Activated CD4-positive, alpha-beta T cell treated with anti-CD3 and anti-CD28 coated beads for 36 hours (primary cell): ENCODE measurements at regions of chr15 and their contacts with region 1.

Region 1: DNA sequence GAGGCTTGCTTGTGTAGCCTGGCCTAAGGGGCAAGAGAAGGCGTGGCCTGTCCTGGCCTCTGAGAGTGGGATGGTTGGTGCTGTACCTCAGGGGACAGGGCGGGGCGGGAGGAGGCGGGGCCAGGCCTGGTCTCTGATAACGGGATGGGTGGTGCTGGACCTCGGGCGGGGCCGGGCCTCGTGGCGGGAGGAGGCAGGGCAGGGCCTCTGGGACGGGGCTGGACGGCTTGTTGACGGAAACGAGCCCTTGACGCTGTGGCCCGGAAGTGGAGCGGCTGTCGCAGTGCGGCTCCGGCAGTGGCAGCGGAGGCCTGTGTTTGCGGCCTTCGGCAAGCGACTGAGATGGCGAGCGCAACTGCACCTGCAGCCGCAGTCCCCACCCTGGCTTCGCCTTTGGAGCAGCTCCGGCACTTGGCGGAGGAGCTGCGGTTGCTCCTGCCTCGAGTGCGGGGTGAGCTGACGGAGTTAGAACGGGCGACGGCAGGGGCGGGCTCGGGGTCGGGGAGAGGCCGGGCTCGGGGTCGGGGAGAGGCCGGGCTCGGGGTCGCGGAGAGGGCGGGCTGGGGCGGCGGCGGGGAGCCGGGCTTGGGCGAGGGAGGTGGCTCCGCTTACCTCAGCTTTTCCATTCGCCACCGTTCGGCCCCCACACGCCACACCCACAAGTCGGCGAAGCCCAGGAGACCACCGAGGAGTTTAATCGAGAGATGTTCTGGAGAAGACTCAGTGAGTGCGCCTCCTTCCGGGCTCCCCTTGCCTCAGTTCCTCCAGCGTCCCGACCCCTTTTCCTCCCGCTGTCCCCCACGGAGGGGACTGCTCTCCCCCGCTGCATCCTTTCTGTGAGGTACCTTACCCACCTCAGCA is at the start of gene CCNDBP1:
- DNase-seq: peak; percentile 94
- ATAC-seq: peak; percentile 96
- H3K4me3 Mint-ChIP-seq: peak within 1 kb of the TSS; percentile 90
- H3K27ac Mint-ChIP-seq: peak within 1 kb of the TSS; percentile 94
- H3K4me1 Mint-ChIP-seq: peaks cover 26% of the 10 kb centered on the region
- H3K27me3 Mint-ChIP-seq: no peaks in the 10 kb centered on the region
- total RNA-seq, gene CCNDBP1: 45.8 to 51.6 TPM

Region 2: DNA sequence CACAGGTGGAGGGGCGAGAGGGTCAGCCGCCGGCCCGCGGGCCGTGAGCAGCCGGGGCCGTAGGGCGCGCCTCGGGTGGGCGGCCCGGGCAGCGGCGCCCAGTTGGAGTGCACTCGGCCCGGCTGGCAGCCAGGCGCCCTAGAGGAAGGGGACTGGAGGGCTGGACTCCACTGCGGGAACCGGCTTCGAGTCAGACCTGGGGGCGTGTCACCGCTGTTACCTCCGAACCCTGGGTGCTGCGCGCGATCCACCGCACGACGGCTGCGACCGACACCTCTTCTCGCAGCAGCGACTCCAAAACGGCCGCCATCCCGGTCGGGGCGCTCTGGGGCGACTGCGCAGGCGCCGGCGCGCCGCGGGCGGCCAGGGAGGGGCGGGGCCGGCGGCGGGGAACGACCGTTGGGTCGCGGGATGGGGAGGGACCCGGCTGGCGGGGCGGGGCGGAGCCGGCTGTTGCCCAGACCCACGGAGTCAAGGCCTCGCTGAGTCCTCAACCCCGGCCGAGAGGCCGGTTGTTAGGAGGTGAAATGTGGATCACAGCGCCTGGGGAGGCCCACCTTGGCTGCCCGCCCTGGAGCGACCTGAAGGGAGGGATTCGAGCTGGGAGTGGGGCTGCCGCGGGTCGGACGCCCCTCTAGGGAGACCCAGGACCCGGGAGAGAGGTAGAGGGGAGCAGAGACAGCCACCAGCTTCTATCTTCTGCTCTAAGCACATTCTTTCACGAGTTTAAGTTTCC is 448.4 kb before region 1 on chr15 and contains the start of gene CDAN1:
- CTCF ChIA-PET with region 1: no interaction called
- POLR2A ChIA-PET with region 1: no interaction called
- intact Hi-C with region 1: loop called in 1 of 2 experiments (anchors 2 kb)
- DNase-seq: peak; percentile 96
- ATAC-seq: peak; percentile 94
- H3K4me3 Mint-ChIP-seq: peak within 1 kb of the TSS; percentile 76
- H3K27ac Mint-ChIP-seq: peak within 1 kb of the TSS; percentile 61
- H3K4me1 Mint-ChIP-seq: peaks cover 16% of the 10 kb centered on the region
- H3K27me3 Mint-ChIP-seq: no peaks in the 10 kb centered on the region
- total RNA-seq, gene CDAN1: 12.9 to 16.6 TPM

Region 3: GRCh38 chr15:43127752-43128151 is 57.6 kb before region 1 on chr15:
- CTCF ChIA-PET with region 1: no interaction called
- POLR2A ChIA-PET with region 1: no interaction called
- intact Hi-C with region 1: loop called in 1 of 2 experiments (anchors 1 kb)
- DNase-seq: no peak
- ATAC-seq: no peak
- H3K4me3 Mint-ChIP-seq: no peak overlapping the region
- H3K27ac Mint-ChIP-seq: no peak overlapping the region
- H3K4me1 Mint-ChIP-seq: peaks cover 9% of the 10 kb centered on the region
- H3K27me3 Mint-ChIP-seq: peaks cover 1% of the 10 kb centered on the region

Region 4: DNA sequence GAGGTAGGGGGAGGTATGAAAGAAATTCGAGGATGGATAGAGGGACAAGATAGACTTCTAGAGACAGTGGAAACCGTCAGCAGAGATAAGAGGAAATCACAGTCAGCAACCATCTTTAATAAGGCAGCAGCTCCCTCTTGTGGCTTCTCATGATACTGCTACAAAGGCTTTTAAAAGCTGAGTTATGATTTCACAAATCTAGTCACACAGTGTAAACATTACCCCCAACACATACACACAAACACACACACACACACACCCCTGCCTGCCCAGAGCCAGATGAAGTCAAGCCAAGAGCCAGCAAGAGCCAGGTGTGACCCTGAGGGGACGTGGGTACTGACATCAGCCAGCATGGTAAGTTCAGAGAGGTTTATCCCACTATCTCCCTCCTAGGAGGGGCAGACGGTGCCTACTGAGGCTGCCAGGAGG is 100.2 kb after region 1 on chr15:
- CTCF ChIA-PET with region 1: interaction called, 18 read pairs
- POLR2A ChIA-PET with region 1: no interaction called
- intact Hi-C with region 1: loop called (anchors 1 kb)
- DNase-seq: peak; percentile 68
- ATAC-seq: peak; percentile 66
- H3K4me3 Mint-ChIP-seq: no peak overlapping the region
- H3K27ac Mint-ChIP-seq: no peak overlapping the region
- H3K4me1 Mint-ChIP-seq: peaks cover 2% of the 10 kb centered on the region
- H3K27me3 Mint-ChIP-seq: peaks cover 3% of the 10 kb centered on the region

Region 5: GRCh38 chr15:43510200-43511011 is 325.0 kb after region 1 on chr15:
- CTCF ChIA-PET with region 1: no interaction called
- POLR2A ChIA-PET with region 1: no interaction called
- intact Hi-C with region 1: loop called in 1 of 2 experiments (anchors 2 kb)
- DNase-seq: peak; percentile 98
- ATAC-seq: peak; percentile 95
- H3K4me3 Mint-ChIP-seq: peak overlapping the region; percentile 91
- H3K27ac Mint-ChIP-seq: peak overlapping the region; percentile 90
- H3K4me1 Mint-ChIP-seq: peaks cover 32% of the 10 kb centered on the region
- H3K27me3 Mint-ChIP-seq: no peaks in the 10 kb centered on the region